CD4-positive, alpha-beta memory T cell (primary cell): ENCODE measurements at regions of chr17 and their contacts with region 1.

Region 1: DNA sequence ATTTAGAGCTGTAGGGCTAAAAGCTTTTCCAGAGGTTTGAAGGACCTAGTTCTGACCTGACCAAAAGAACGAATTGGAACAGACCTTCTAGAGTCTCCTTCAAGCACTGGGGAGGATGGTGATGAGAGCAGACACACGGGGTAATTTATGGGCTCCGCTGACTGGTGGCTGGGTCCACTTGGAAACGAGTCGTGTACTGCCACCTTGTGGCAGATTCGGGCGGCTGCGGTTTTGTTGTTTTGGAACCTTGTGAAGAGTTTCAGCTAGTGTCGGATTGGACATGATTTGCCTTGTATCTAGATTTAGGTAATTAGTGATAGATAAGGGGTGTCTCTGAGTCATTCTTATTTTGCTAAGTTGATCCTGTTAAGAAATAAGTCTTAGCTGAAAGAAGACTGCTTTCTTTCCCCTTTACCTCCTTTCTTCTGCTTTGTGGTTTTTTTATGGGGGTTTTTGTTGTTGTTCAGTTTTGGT is 98.9 kb downstream of the AATF start:
- DNase-seq: peak; percentile 62 to 72 (median 70)
- H3K4me3 ChIP-seq: no peak overlapping the region
- H3K4me3 Mint-ChIP-seq: no peak overlapping the region
- H3K27ac ChIP-seq: no peak overlapping the region
- H3K27ac Mint-ChIP-seq: peak overlapping the region in 6 of 7 donors; percentile 62 to 77 (median 71)
- H3K4me1 ChIP-seq: no peaks in the 10 kb centered on the region
- H3K4me1 Mint-ChIP-seq: peaks cover 9 to 13% (median 10%) of the 10 kb centered on the region in 4 donors
- H3K27me3 ChIP-seq: no peaks in the 10 kb centered on the region
- H3K27me3 Mint-ChIP-seq: no peaks in the 10 kb centered on the region

Region 2: GRCh38 chr17:36463916-36464315 is 583.8 kb before region 1 on chr17:
- CTCF ChIA-PET with region 1: no interaction called
- POLR2A ChIA-PET with region 1: no interaction called
- intact Hi-C with region 1: no loop called
- DNase-seq: peak; percentile 16 to 55 (median 25)
- H3K4me3 ChIP-seq: no peak overlapping the region
- H3K4me3 Mint-ChIP-seq: no peak overlapping the region
- H3K27ac ChIP-seq: no peak overlapping the region
- H3K27ac Mint-ChIP-seq: no peak overlapping the region
- H3K4me1 ChIP-seq: no peaks in the 10 kb centered on the region
- H3K4me1 Mint-ChIP-seq: no peaks in the 10 kb centered on the region
- H3K27me3 ChIP-seq: peaks cover 8% of the 10 kb centered on the region
- H3K27me3 Mint-ChIP-seq: peaks cover 40 to 52% of the 10 kb centered on the region in 2 donors

Region 3: DNA sequence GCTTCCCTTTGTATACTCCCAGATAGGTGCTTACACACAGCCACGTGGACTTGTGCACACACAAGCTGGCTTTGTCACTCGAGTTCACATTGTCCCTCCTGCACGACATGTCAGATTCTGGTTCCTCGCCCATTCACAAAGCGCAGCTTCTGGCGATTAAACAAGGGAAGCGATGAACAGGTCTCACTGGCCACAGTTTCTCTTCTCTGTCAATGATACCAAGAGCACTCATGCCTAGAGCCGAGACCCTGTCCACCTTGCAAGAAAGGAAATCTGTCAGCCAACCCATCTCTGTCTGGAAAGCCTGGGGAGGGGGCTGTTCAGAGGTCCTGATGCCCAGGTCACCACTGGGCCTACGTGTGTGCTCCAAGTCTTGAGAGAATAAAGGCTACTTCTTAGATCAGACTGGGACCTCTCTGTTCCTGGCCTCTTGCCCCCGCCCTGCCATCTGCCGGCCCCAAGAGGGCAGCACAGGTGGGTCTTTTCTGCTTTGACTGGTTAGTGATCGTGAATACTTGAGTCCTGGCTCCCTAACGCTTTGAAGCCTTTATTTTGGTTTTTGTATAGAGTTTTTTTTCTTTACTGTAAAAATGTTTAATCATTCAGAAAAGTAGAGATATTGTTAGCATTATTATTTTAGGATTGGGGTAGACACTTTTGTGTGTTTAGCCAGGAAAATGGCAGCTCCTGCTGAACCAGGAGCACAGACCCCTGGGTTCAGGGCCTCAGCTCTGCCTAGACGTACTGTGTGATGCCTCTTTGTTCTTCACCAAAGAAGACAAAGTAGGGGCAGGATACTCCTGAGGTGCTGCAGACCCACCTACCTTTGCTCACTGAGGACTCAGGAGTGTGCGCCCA is 341.6 kb before region 1 on chr17:
- CTCF ChIA-PET with region 1: interaction called, 3 read pairs
- POLR2A ChIA-PET with region 1: no interaction called
- intact Hi-C with region 1: loop called (anchors 1 kb)
- DNase-seq: peak; percentile 36 to 52 (median 47)
- H3K4me3 ChIP-seq: no peak overlapping the region
- H3K4me3 Mint-ChIP-seq: no peak overlapping the region
- H3K27ac ChIP-seq: no peak overlapping the region
- H3K27ac Mint-ChIP-seq: peak overlapping the region in 1 of 7 donors; percentile 11
- H3K4me1 ChIP-seq: no peaks in the 10 kb centered on the region
- H3K4me1 Mint-ChIP-seq: peaks cover 0 to 8% (median 0%) of the 10 kb centered on the region in 4 donors
- H3K27me3 ChIP-seq: peaks cover 6% of the 10 kb centered on the region
- H3K27me3 Mint-ChIP-seq: peaks cover 22 to 30% of the 10 kb centered on the region in 2 donors

Region 4: GRCh38 chr17:36755586-36755985 is 292.1 kb before region 1 on chr17:
- CTCF ChIA-PET with region 1: interaction called, 10 read pairs
- POLR2A ChIA-PET with region 1: no interaction called
- intact Hi-C with region 1: no loop called
- DNase-seq: peak in 4 of 5 donors; percentile 28 to 34 (median 30)
- H3K4me3 ChIP-seq: no peak overlapping the region
- H3K4me3 Mint-ChIP-seq: no peak overlapping the region
- H3K27ac ChIP-seq: no peak overlapping the region
- H3K27ac Mint-ChIP-seq: no peak overlapping the region
- H3K4me1 ChIP-seq: no peaks in the 10 kb centered on the region
- H3K4me1 Mint-ChIP-seq: peaks cover 2 to 7% (median 6%) of the 10 kb centered on the region in 4 donors
- H3K27me3 ChIP-seq: no peaks in the 10 kb centered on the region
- H3K27me3 Mint-ChIP-seq: no peaks in the 10 kb centered on the region

Region 5: DNA sequence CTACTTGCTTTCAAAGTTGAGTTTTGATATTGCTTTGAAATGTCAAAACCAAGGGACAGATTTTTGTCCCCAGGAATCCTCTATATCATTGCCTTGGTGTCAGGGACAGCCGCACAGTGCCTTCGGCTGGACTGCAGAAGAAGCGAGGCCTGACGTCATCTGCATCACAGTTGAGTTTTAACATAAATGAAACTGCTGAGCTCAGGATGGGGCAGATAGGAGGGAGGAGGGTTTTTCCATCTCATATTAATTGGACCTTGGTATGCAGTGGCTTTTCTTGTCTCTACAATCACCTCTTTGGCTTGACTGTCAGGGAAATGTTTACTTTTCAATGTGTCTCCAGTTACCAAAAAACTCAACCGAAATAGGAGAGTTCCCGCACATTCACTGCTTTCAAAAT is 12.4 kb after region 1 on chr17:
- CTCF ChIA-PET with region 1: interaction called, 24 read pairs
- POLR2A ChIA-PET with region 1: no interaction called
- intact Hi-C with region 1: no loop called
- DNase-seq: no peak
- H3K4me3 ChIP-seq: no peak overlapping the region
- H3K4me3 Mint-ChIP-seq: no peak overlapping the region
- H3K27ac ChIP-seq: no peak overlapping the region
- H3K27ac Mint-ChIP-seq: no peak overlapping the region
- H3K4me1 ChIP-seq: no peaks in the 10 kb centered on the region
- H3K4me1 Mint-ChIP-seq: no peaks in the 10 kb centered on the region
- H3K27me3 ChIP-seq: no peaks in the 10 kb centered on the region
- H3K27me3 Mint-ChIP-seq: no peaks in the 10 kb centered on the region

Region 6: DNA sequence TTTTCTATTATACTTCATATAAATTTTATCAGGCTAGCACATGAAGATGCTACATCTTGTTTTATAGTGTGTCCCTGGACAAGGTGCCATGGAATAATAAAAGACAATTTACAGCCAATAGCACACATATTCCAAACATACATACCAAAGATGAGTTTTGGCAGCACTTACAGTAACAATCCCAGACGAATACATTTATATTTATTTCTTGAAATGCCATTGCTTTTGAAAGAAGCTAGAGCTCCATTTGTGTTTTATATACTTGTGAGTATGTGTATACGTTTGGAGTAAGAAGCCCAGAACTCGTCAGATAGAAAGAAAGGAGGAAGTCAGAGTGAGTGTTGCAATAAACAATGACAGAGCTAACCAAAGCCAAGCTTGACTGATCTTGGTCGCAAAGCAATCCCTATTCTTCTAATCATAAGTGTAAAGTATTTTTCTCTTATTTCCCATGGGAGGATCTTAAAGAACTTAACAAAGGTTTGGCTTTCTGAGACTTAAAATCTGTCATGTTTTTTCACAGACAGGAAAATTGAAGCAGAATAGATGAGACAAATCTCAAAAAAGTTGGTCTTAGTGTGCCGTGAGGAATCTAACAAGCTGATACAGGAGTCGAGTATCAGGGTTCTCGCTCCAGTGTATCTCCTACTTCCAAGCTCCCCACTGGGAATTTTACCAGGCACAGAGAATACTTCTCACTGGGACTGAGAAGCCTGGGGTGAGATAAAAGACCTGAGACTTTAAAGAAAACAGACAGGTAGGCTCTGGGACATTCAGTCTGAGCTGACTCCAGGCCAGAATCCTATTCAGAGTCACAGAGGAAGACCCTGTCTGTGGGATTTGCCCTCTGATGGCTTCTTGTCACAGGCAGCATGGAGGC is 76.5 kb after region 1 on chr17:
- CTCF ChIA-PET with region 1: no interaction called
- POLR2A ChIA-PET with region 1: no interaction called
- intact Hi-C with region 1: no loop called
- DNase-seq: no peak
- H3K4me3 ChIP-seq: no peak overlapping the region
- H3K4me3 Mint-ChIP-seq: no peak overlapping the region
- H3K27ac ChIP-seq: no peak overlapping the region
- H3K27ac Mint-ChIP-seq: no peak overlapping the region
- H3K4me1 ChIP-seq: no peaks in the 10 kb centered on the region
- H3K4me1 Mint-ChIP-seq: no peaks in the 10 kb centered on the region
- H3K27me3 ChIP-seq: no peaks in the 10 kb centered on the region
- H3K27me3 Mint-ChIP-seq: no peaks in the 10 kb centered on the region